Heart left ventricle (tissue), 16 donors: ENCODE measurements at regions of chr15 and their contacts with region 1.

Region 1: GRCh38 chr15:23924688-23925087 is 237.6 kb upstream of the NDN start:
- DNase-seq: no peak
- ATAC-seq: no peak
- H3K4me3 ChIP-seq: no peak overlapping the region
- H3K27ac ChIP-seq: no peak overlapping the region
- H3K4me1 ChIP-seq: no peaks in the 10 kb centered on the region
- H3K27me3 ChIP-seq: no peaks in the 10 kb centered on the region
- CTCF ChIP-seq: no peak
- POLR2A ChIP-seq: no peak

Region 2: DNA sequence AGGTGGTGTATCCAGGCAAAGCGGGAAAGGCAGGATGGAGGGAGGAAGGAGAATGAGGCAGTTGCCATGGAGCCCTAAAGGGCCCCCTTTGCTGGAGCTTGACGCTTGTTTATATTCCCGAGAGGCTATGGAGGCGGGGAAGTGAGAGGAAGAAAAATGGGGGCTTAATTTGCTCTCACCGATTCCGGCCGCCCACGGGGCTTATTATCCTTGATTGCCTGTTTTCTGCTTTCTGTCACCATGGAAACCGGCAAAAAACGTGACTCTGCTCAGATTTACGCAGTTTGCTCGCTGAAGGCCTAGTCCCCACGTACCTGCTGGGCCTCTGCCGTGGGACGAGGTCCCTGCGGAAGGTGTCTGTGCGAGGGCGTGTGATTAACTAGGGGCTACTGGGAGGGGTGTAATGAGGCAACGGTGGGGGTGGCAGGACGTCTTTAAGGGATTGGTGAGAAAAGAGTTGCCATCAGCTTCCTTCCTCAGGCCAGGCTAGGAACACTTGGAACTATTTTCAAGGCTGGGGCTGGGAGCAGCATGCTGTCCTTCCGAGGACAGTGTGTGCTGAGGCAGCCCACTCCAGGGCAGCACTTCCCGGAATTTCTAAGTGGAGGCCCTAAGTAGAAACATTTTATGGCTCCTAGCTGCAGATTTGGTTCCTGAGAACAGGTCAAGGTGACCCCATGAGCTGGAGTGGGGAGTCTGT is 126.8 kb before region 1 on chr15:
- intact Hi-C with region 1: loop called in 1 of 10 experiments (anchors 5 kb)
- DNase-seq: no peak
- ATAC-seq: no peak
- H3K4me3 ChIP-seq: no peak overlapping the region
- H3K27ac ChIP-seq: no peak overlapping the region
- H3K4me1 ChIP-seq: no peaks in the 10 kb centered on the region
- H3K27me3 ChIP-seq: no peaks in the 10 kb centered on the region
- CTCF ChIP-seq: no peak
- POLR2A ChIP-seq: no peak